ENCODE measurements at regions of chr1 and their contacts with region 1.

Region 1: DNA sequence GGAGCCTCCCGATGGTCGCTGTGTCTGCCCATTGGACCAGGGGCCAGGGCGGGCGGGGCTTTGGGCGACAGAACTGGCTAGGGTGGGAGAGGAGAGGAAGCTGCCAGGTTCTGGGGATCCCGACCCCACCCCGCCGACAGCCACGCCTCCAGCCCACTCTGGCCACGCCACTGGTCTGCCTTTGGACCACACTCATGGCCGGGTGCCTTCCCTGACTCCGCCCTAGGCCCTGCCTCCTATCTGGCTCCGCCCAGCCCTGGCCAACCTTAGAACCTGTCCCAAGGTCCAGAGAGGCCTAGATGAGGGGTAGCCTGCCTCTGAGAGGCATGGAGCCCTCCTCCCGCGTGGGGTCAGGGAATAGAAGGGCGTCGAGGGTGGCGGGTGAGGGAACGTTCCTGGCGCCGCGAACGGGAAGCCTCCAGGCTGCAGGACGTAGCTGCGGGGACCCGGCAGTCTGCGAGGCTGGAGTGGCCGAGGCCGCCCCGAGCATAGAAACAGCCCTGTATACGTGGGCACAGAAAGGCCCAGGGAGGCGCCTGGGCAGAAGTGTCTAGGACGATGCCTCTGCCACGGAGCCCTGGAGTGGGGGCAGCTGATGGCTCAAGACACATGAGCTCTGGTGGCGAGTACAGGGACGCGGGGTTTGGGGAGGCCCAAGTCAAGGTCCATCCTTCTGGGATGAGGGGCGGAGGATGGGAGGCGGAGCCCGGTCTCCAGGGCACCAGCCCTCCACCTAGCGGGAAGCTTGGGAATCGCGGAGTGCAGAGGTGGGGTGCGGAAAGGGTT is 11.5 kb upstream of the COL16A1 start:
- DNase-seq: peak; percentile 96
- ATAC-seq: peak; percentile 96

Region 2: DNA sequence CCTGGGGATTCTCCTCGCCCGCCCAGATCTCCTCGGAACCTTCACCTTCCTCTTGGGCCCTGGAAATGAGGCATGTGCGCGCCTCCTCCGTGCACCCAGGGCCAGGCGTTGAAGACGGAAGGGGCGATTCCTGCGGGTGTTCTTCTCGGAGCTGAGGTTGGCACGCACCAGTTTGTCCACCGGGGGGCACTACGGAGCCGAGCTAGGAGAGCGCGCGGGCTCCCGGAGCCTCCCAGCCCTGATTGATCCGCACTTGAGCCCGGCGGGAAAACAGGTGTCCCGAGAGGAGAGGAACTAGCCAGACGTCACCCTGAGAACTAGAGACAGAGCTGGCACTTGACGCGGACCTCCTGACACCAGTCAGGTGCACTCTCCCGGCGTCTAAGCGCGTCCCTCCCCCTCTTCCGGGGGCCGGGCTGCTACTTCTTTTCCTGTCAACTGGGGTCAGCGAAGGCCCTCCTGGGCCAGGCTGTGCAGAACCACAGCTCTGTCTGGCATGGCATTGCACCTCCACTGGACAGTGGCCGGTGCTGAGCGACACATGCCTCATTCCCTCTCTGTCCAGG is 320.6 kb before region 1 on chr1:
- intact Hi-C with region 1: no loop called
- DNase-seq: peak; percentile 90
- ATAC-seq: peak; percentile 95

Region 3: DNA sequence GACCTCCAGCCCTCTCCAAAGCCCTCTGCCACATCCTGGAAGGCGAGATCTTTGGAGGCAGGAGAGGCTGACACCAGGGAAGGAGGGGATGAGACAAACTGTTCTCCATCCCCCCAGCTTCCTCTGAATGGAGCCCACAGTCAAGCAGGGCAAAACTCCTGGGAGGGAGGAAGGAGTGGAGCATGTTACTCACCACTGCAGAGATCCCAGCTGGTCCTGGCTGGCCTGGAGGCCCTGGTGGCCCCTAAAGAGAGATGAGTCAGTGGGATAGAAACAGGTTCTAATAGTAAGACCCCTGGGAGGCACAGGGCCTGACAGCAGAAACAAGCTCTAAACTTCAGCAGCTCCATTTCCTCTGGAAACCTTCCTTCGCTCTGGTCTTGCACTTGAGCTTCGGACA is 56.6 kb before region 1 on chr1:
- intact Hi-C with region 1: no loop called
- DNase-seq: no peak
- ATAC-seq: no peak

Region 4: DNA sequence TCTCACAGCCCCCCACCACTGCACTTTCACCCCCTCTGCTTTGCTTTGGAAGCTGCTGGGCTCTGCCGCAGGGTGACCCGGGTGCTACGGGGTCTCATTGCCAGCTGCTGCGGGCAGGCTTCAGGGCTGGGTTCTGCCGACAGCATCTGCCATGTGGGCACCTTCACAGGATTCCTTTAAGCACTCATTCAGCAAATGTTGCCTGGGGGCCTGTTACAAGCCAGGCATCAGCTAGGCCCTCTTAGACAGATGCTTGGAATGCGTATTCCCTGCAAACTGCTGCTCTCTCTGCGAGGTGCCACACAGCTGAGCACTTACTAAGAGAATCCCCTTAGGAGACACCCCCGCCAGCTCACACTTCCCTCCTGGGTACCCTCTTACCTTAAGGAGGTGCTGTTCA is 40.7 kb before region 1 on chr1:
- intact Hi-C with region 1: loop called (anchors 5 kb)
- DNase-seq: no peak
- ATAC-seq: no peak

Region 5: DNA sequence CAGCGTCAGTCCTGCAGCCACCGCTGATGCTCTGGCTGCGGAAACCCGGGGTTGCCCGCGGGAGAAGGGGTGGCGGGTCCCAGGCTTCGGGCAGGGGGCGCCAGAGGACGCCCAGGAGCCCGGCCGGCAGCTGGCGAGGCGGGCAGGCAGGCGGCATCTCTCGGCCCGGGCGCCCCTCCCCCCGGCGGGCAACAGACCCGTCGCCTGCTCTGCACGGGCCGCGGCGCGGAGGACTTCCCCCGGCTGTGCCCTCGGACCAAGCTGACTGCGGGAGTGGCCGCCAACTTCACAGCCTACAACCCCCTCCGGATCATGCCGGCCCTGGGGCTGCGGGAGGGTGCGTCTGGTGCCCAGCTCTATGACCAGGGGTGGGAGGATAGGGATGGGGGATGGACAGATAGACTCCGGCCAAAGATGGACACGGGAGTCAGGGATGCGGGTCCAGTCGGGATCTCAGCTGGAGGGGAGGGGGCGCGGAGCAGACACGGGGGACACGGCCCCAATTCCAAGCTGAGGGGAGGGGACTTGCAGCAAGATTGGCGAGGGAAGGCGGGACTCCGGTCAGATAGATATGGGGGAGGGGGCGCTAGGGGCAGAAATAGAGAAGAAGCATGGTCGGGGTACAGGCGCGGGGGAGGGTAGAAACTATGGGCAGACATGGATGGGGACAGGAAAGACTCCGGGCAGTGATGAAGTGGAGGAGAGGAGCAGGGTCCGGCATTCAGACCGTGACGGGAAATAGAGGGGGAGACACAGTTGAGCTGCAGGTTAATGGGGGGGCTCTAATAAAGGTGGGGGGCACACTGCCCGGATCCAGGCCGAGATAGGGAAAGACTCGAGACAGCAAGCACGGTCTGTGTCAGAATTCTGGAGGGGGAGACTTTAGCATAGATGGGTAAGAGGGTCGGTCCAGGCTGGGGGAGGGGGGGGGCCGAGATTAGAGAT is 47.7 kb after region 1 on chr1:
- intact Hi-C with region 1: loop called (anchors 10 kb)
- DNase-seq: peak; percentile 75
- ATAC-seq: peak; percentile 77

Region 6: GRCh38 chr1:31984419-31985347 is 269.4 kb after region 1 on chr1:
- intact Hi-C with region 1: no loop called
- DNase-seq: no peak
- ATAC-seq: peak; percentile 72

Measured in Right ventricle myocardium superior (tissue), 1 donor.